ENCODE measurements at regions of chr3 and their contacts with region 1.

Region 1: DNA sequence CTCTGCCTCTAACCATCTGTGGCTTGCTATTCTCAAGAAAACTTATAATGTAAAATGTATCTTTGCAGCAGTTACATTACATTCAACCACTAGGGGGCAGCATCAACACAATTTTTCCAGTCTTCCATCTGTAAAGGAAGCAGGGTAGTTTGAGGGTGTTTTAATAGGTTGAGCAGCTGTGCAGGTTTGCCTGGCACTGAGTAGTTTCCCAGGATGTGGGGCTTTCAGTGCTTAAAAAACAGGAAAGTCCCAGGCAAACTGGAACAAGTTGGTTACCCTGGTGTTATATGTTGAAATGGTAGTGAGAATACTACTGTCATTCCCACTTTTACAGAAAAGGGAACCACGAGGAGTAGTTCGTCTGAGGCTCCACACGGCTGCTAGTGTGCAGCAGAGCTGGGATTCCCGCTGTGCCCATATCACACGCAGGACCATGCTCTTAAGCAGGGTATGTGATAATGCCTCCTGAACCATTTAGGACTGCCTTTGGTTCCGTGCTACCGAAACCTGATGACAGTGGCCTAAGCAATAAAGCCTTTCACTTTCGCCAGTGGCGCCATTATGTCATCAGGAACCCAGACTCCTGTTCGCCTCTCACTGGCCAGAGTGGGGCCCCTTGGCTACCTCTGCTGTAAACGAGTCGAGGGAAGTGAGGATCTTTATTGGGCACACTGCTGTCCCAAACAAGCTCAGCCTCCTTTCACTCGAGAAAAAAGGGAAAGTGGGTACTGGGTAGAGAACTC is 64.7 kb upstream of the ZBTB38 start:
- DNase-seq: peak in 7 of 9 donors; percentile 62 to 84 (median 77)
- ATAC-seq: peak; percentile 77
- H3K4me3 ChIP-seq: no peak overlapping the region
- H3K4me3 Mint-ChIP-seq: peak overlapping the region in 1 of 10 donors; percentile 3
- H3K27ac ChIP-seq: no peak overlapping the region
- H3K27ac Mint-ChIP-seq: peak overlapping the region in 5 of 9 donors; percentile 4 to 84 (median 50)
- H3K4me1 ChIP-seq: peaks cover 20 to 57% of the 10 kb centered on the region in 2 donors
- H3K4me1 Mint-ChIP-seq: peaks cover 30 to 90% (median 80%) of the 10 kb centered on the region in 7 donors
- H3K27me3 ChIP-seq: no peaks in the 10 kb centered on the region
- H3K27me3 Mint-ChIP-seq: peaks cover 0 to 5% (median 0%) of the 10 kb centered on the region in 5 donors

Region 2: DNA sequence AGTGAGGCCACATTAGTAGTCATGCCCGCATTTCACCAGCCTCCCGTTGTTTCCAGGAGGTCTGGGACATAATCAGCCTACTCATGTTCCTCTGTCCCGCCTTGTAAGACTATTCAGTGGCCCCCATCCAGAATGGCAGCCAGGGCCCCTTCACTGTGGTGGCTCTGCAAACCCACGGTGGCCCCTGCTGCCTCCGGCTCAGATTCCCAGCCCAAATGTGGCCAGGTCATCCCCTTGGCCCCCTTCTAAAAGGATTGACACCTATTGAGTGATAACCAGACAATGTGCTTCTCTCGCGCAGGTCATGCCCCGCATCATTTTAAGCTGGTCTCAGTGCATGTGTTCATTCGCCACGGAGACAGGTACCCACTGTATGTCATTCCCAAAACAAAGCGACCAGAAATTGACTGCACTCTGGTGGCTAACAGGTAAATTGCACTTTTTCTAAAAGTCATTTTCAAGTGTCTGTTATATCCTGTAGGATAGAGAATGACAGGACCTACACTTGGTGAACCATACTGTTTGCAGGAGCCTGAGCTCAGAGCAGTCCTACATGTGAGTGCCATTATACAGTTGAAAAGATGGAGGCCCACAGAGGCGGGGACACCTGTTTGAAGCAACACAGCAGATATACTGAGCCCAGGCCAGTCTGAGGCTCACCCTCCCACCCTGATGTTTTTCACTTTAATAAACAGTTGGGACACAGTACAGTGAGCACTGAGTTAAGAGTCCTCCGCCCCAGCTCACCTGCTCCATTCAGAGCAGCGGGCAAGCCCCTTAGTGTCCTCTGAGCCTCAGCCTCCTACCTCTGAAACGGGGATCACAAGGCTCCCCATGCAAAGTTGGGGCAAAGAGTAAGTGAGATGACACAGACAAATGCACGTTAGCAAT is 24.3 kb before region 1 on chr3:
- CTCF ChIA-PET with region 1: interaction called, 4 read pairs
- POLR2A ChIA-PET with region 1: interaction called, 4 read pairs
- intact Hi-C with region 1: loop called in 1 of 2 experiments (anchors 1 kb)
- DNase-seq: peak in 7 of 9 donors; percentile 23 to 58 (median 46)
- ATAC-seq: peak; percentile 82
- H3K4me3 ChIP-seq: no peak overlapping the region
- H3K4me3 Mint-ChIP-seq: peak overlapping the region in 1 of 10 donors; percentile 17
- H3K27ac ChIP-seq: no peak overlapping the region
- H3K27ac Mint-ChIP-seq: peak overlapping the region in 6 of 9 donors; percentile 1 to 83 (median 44)
- H3K4me1 ChIP-seq: peaks cover 10 to 19% of the 10 kb centered on the region in 2 donors
- H3K4me1 Mint-ChIP-seq: peaks cover 14 to 36% (median 21%) of the 10 kb centered on the region in 7 donors
- H3K27me3 ChIP-seq: no peaks in the 10 kb centered on the region
- H3K27me3 Mint-ChIP-seq: no peaks in the 10 kb centered on the region

Region 3: GRCh38 chr3:141321109-141321497 is 17.5 kb after region 1 on chr3:
- CTCF ChIA-PET with region 1: interaction called, 7 read pairs
- POLR2A ChIA-PET with region 1: interaction called, 18 read pairs
- intact Hi-C with region 1: no loop called
- DNase-seq: no peak
- ATAC-seq: peak; percentile 22
- H3K4me3 ChIP-seq: peak overlapping the region; percentile 24
- H3K4me3 Mint-ChIP-seq: peak overlapping the region in 8 of 10 donors; percentile 26 to 78 (median 64)
- H3K27ac ChIP-seq: peak overlapping the region; percentile 52
- H3K27ac Mint-ChIP-seq: peak overlapping the region in 8 of 9 donors; percentile 69 to 95 (median 90)
- H3K4me1 ChIP-seq: peaks cover 15 to 25% of the 10 kb centered on the region in 2 donors
- H3K4me1 Mint-ChIP-seq: peaks cover 13 to 41% (median 30%) of the 10 kb centered on the region in 7 donors
- H3K27me3 ChIP-seq: no peaks in the 10 kb centered on the region
- H3K27me3 Mint-ChIP-seq: peaks cover 0 to 1% (median 0%) of the 10 kb centered on the region in 5 donors

Region 4: GRCh38 chr3:141360888-141361598 is 57.4 kb after region 1 on chr3:
- CTCF ChIA-PET with region 1: interaction called, 42 read pairs
- POLR2A ChIA-PET with region 1: interaction called, 5 read pairs
- intact Hi-C with region 1: loop called in 1 of 2 experiments (anchors 1 kb)
- DNase-seq: peak in 7 of 9 donors; percentile 20 to 56 (median 45)
- ATAC-seq: peak; percentile 83
- H3K4me3 ChIP-seq: no peak overlapping the region
- H3K4me3 Mint-ChIP-seq: peak overlapping the region in 4 of 10 donors; percentile 16 to 40 (median 28)
- H3K27ac ChIP-seq: no peak overlapping the region
- H3K27ac Mint-ChIP-seq: peak overlapping the region in 2 of 9 donors; percentile 26 to 51
- H3K4me1 ChIP-seq: no peaks in the 10 kb centered on the region
- H3K4me1 Mint-ChIP-seq: peaks cover 5 to 9% (median 7%) of the 10 kb centered on the region in 7 donors
- H3K27me3 ChIP-seq: no peaks in the 10 kb centered on the region
- H3K27me3 Mint-ChIP-seq: peaks cover 0 to 11% (median 0%) of the 10 kb centered on the region in 5 donors

Region 5: GRCh38 chr3:141370065-141370533 is 66.4 kb after region 1 on chr3:
- CTCF ChIA-PET with region 1: interaction called, 4 read pairs
- POLR2A ChIA-PET with region 1: interaction called, 3 read pairs
- intact Hi-C with region 1: loop called in 1 of 2 experiments (anchors 1 kb)
- DNase-seq: peak; percentile 17 to 90 (median 81)
- ATAC-seq: peak; percentile 99
- H3K4me3 ChIP-seq: no peak overlapping the region
- H3K4me3 Mint-ChIP-seq: no peak overlapping the region
- H3K27ac ChIP-seq: no peak overlapping the region
- H3K27ac Mint-ChIP-seq: peak overlapping the region in 6 of 9 donors; percentile 13 to 76 (median 46)
- H3K4me1 ChIP-seq: no peaks in the 10 kb centered on the region
- H3K4me1 Mint-ChIP-seq: peaks cover 4 to 17% (median 7%) of the 10 kb centered on the region in 7 donors
- H3K27me3 ChIP-seq: no peaks in the 10 kb centered on the region
- H3K27me3 Mint-ChIP-seq: peaks cover 0 to 3% (median 0%) of the 10 kb centered on the region in 5 donors